WTC11 (cell line): ENCODE measurements at regions of chr12 and their contacts with region 1.

Region 1: GRCh38 chr12:47837190-47838171 is 17.8 kb upstream of the HDAC7 start:
- DNase-seq: peak; percentile 75
- ATAC-seq: peak; percentile 61
- H3K4me3 Mint-ChIP-seq: no peak overlapping the region
- H3K27ac Mint-ChIP-seq: no peak overlapping the region
- H3K4me1 Mint-ChIP-seq: peaks cover 19% of the 10 kb centered on the region
- H3K27me3 Mint-ChIP-seq: no peaks in the 10 kb centered on the region
- CTCF ChIP-seq: peak; percentile 96

Region 2: DNA sequence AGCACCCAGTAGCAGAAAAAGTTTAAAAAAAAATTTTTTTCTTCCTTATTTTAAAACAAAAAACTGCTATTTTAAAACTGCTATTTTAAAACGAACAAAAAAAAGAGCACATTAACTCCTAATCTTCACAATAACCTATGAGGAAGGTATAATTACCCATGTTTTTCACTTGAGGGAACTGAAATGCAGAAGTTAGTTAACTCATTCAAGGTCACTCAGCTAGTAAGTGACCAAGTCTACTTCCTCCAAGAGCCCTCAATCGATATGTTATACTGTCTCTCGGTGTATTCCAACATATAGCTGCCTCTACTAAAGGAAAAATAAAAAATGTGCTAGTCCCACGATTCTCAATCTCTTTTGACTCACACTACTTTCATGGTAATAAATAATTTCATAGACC is 139.4 kb before region 1 on chr12:
- CTCF ChIA-PET with region 1: no interaction called
- POLR2A ChIA-PET with region 1: no interaction called
- DNase-seq: no peak
- ATAC-seq: no peak
- H3K4me3 Mint-ChIP-seq: no peak overlapping the region
- H3K27ac Mint-ChIP-seq: no peak overlapping the region
- H3K4me1 Mint-ChIP-seq: no peaks in the 10 kb centered on the region
- H3K27me3 Mint-ChIP-seq: no peaks in the 10 kb centered on the region
- CTCF ChIP-seq: no peak

Region 3: DNA sequence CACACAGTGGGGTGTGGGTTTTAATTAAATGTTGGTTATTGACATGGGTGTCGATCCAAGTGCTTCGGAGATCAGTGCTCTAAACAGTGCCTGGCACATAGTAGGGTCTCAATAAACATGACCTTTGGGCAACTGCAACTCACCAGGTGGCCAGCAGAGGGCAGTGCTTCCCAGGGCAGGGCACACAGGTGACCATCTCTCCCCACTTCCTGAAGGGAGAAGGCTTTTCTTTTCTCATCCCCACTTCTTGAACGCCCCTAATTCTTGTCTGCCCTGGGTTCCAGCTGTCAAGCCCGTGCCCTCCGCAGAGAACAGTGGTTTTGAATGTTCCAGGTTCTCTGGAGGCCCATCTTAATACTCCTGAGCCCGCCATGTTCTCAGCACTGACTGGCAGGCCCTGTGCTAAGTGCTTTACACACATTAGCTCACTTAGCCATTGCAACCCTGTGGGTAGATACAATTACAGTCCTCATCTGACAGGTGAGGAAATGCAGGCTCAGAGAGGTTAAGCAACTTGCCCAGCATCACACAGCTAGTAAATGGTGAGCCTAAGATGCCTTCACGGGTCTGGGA is 95.1 kb before region 1 on chr12:
- CTCF ChIA-PET with region 1: interaction called, 153 read pairs
- POLR2A ChIA-PET with region 1: no interaction called
- DNase-seq: peak; percentile 88
- ATAC-seq: peak; percentile 31
- H3K4me3 Mint-ChIP-seq: no peak overlapping the region
- H3K27ac Mint-ChIP-seq: no peak overlapping the region
- H3K4me1 Mint-ChIP-seq: peaks cover 32% of the 10 kb centered on the region
- H3K27me3 Mint-ChIP-seq: peaks cover 10% of the 10 kb centered on the region
- CTCF ChIP-seq: peak; percentile 99

Region 4: GRCh38 chr12:47767216-47767724 is 70.2 kb before region 1 on chr12:
- CTCF ChIA-PET with region 1: interaction called, 63 read pairs
- POLR2A ChIA-PET with region 1: interaction called, 5 read pairs
- DNase-seq: peak; percentile 76
- ATAC-seq: peak; percentile 61
- H3K4me3 Mint-ChIP-seq: no peak overlapping the region
- H3K27ac Mint-ChIP-seq: no peak overlapping the region
- H3K4me1 Mint-ChIP-seq: peaks cover 18% of the 10 kb centered on the region
- H3K27me3 Mint-ChIP-seq: peaks cover 6% of the 10 kb centered on the region
- CTCF ChIP-seq: peak; percentile 51; the same call in 1 of the 2 replicates

Region 5: DNA sequence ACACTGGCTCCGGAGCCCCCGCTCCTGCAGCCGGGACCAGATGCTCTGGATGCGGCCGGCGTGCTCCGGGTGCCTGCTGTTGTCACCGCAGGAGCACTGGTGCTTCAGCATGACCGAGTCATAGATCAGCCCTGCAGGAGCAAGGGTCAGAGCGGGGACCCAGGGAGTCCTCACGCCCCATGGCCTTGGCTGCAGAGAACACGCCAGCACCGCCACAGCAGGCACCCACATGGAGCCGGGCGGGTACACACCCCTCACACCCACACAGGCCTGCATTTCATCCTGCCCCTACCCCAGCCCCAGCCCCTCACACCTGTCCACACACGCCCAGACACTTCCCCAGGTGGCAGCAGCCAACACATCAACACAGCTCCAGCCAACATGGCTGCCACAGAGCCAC is 45.6 kb before region 1 on chr12:
- CTCF ChIA-PET with region 1: interaction called, 408 read pairs
- POLR2A ChIA-PET with region 1: no interaction called
- DNase-seq: no peak
- ATAC-seq: no peak
- H3K4me3 Mint-ChIP-seq: no peak overlapping the region
- H3K27ac Mint-ChIP-seq: peak overlapping the region; percentile 72; the same call in 1 of the 2 replicates
- H3K4me1 Mint-ChIP-seq: no peaks in the 10 kb centered on the region
- H3K27me3 Mint-ChIP-seq: no peaks in the 10 kb centered on the region
- CTCF ChIP-seq: no peak

Region 6: DNA sequence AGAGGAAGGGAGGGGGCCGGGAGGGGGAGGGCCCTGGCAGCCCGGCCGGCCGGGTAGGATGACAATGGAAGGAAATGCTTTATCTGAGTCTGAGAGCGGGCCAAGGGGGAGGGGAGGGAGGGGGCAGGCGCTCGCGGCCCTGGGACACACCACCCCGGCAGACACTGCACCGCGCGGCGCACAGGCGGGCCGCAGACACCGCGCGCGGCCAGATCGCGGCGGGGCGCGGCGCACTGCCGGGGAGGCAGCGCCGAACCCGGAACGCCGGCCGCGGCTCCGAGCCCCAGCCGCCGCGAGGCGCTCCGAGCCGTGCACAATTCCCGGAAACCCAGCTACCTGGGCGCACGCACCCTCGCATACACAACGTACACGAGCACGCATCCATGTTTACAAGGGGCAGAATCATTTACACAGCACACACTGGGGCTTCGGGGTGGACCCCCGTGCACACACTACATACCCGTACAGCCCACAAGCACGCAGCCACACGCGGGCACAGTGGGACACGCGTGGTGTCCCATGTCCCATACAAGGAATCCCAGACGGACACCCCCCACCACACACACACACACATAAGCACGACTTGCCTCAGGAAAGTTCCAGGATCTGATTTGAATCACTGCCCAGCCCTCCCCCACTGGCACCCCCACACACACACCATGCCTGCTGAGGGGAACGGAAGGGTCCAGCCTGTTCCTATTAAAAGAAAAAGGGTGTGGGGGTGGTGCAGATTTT is 17.4 kb before region 1 on chr12 and contains the start of gene HDAC7:
- CTCF ChIA-PET with region 1: interaction called, 134 read pairs
- POLR2A ChIA-PET with region 1: interaction called, 5 read pairs
- DNase-seq: peak; percentile 74
- ATAC-seq: peak; percentile 51
- H3K4me3 Mint-ChIP-seq: peak within 1 kb of the TSS; percentile 86
- H3K27ac Mint-ChIP-seq: peak within 1 kb of the TSS; percentile 98
- H3K4me1 Mint-ChIP-seq: peaks cover 59% of the 10 kb centered on the region
- H3K27me3 Mint-ChIP-seq: peaks cover 12% of the 10 kb centered on the region
- CTCF ChIP-seq: no peak
- total RNA-seq, gene HDAC7: 89.9 to 111 TPM (median 94.7 TPM) in 3 replicates

Region 7: GRCh38 chr12:47904713-47905310 is 67.3 kb after region 1 on chr12 and contains the start of gene VDR:
- CTCF ChIA-PET with region 1: interaction called, 23 read pairs
- POLR2A ChIA-PET with region 1: no interaction called
- DNase-seq: peak; percentile 83
- ATAC-seq: peak; percentile 86
- H3K4me3 Mint-ChIP-seq: peak within 1 kb of the TSS; percentile 73
- H3K27ac Mint-ChIP-seq: peak within 1 kb of the TSS; percentile 89
- H3K4me1 Mint-ChIP-seq: peaks cover 14% of the 10 kb centered on the region
- H3K27me3 Mint-ChIP-seq: peaks cover 92% of the 10 kb centered on the region
- CTCF ChIP-seq: no peak
- total RNA-seq, gene VDR: 0.76 to 1.3 TPM (median 0.76 TPM) in 3 replicates